Activated T-helper 2 cell treated with anti-CD3 and anti-CD28 coated beads, Interferon-gamma antibody, Interleukin-2, Interleukin-4, amounts not matched to agents 10 μg/mL and 5 μg/mL and 100 μg/mL, durations not matched to agents 14 hours and 24 hours and 36 hours (primary cell): ENCODE measurements at regions of chr2 and their contacts with region 1.

Region 1: DNA sequence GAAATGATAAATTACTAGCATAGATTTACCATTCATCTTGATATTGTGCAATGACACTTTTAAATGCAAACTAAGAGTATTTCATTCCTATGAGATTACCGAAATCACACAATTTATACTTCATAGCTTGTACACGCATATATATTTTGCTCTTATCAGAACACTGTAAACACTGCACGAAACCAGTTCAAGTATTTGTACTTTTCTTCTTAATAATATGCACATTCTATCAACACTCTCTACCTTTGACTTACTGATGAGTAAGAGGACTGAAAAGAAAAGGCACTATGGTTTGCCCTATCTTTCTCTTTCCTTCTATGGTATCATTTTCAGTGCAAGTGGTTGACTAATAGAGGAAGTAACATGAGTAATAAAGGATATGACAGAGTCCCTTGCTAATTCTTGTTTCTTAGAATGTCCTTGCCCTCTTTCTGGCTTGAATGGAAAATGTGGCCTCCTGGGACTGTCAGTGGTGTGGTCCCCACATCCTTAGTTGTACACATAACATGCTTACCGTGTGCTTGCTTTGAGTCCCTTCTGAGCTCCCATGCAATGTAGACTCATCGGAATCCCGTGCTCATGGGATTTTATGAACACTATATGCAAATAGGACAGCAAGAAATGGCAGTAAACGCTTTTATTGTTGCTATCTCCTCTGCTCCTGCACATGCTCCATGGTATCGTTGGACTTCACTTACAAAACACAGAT is 363.5 kb upstream of the TNP1 start:
- DNase-seq: peak; percentile 56
- H3K4me3 Mint-ChIP-seq: peak overlapping the region; percentile 19
- H3K27ac Mint-ChIP-seq: peak overlapping the region; percentile 58
- H3K4me1 Mint-ChIP-seq: peaks cover 49% of the 10 kb centered on the region
- H3K27me3 Mint-ChIP-seq: peaks cover 4% of the 10 kb centered on the region

Region 2: GRCh38 chr2:216114714-216115557 is 1108.4 kb before region 1 on chr2:
- intact Hi-C with region 1: loop called (anchors 5 kb)
- DNase-seq: peak; percentile 94
- H3K4me3 Mint-ChIP-seq: peak overlapping the region; percentile 86
- H3K27ac Mint-ChIP-seq: peak overlapping the region; percentile 77
- H3K4me1 Mint-ChIP-seq: peaks cover 77% of the 10 kb centered on the region
- H3K27me3 Mint-ChIP-seq: no peaks in the 10 kb centered on the region

Region 3: GRCh38 chr2:216507220-216508160 is 715.9 kb before region 1 on chr2:
- intact Hi-C with region 1: loop called (anchors 10 kb)
- DNase-seq: no peak
- H3K4me3 Mint-ChIP-seq: no peak overlapping the region
- H3K27ac Mint-ChIP-seq: peak overlapping the region; percentile 29
- H3K4me1 Mint-ChIP-seq: peaks cover 24% of the 10 kb centered on the region
- H3K27me3 Mint-ChIP-seq: no peaks in the 10 kb centered on the region

Region 4: DNA sequence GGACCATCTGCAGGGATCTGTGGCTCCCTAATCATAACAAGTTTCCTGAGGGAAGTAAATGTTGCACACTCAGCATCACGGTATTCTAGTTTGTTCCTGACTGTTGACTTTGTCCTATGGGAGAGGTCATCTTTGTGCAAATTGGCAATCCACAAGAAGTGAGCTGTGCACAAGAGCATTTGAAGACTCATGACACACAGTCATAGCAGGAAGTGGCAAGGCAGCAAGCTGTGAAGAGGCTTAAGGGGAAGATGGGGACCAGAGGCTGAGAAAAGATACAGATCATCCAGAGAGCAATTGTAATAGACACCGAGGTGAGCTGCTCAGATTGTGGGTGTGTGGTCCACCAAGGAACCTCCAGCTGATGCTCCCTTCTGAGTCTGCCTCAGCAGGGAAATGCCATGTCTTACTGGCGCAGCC is 366.2 kb before region 1 on chr2:
- intact Hi-C with region 1: loop called (anchors 1 kb)
- DNase-seq: peak; percentile 29
- H3K4me3 Mint-ChIP-seq: no peak overlapping the region
- H3K27ac Mint-ChIP-seq: peak overlapping the region; percentile 88
- H3K4me1 Mint-ChIP-seq: peaks cover 45% of the 10 kb centered on the region
- H3K27me3 Mint-ChIP-seq: no peaks in the 10 kb centered on the region

Region 5: GRCh38 chr2:217166241-217166850 is 57.0 kb before region 1 on chr2:
- intact Hi-C with region 1: loop called (anchors 1 kb)
- DNase-seq: no peak
- H3K4me3 Mint-ChIP-seq: no peak overlapping the region
- H3K27ac Mint-ChIP-seq: no peak overlapping the region
- H3K4me1 Mint-ChIP-seq: peaks cover 19% of the 10 kb centered on the region
- H3K27me3 Mint-ChIP-seq: peaks cover 18% of the 10 kb centered on the region

Region 6: GRCh38 chr2:217256251-217256650 is 32.9 kb after region 1 on chr2:
- intact Hi-C with region 1: no loop called
- DNase-seq: no peak
- H3K4me3 Mint-ChIP-seq: no peak overlapping the region
- H3K27ac Mint-ChIP-seq: no peak overlapping the region
- H3K4me1 Mint-ChIP-seq: no peaks in the 10 kb centered on the region
- H3K27me3 Mint-ChIP-seq: peaks cover 24% of the 10 kb centered on the region

Region 7: DNA sequence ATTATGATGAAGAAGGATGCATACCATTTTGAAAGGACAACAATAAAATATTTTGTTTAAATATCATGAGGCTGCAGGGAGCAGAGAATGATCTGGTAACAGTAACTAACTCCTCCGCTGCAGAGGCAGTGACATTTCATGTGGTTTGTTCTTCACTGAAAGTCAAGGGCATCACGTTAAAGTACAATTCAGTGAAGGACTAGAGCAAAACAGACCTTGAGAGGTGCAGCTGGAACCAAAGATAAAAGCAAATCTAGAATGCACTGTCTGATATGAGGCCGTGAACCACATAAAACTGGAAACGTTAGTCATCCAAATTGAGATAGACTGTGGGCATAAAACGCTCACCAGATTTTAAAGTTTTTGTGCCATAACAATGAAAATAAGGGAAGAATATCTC is 159.4 kb after region 1 on chr2:
- intact Hi-C with region 1: no loop called
- DNase-seq: no peak
- H3K4me3 Mint-ChIP-seq: no peak overlapping the region
- H3K27ac Mint-ChIP-seq: no peak overlapping the region
- H3K4me1 Mint-ChIP-seq: no peaks in the 10 kb centered on the region
- H3K27me3 Mint-ChIP-seq: peaks cover 3% of the 10 kb centered on the region

Region 8: DNA sequence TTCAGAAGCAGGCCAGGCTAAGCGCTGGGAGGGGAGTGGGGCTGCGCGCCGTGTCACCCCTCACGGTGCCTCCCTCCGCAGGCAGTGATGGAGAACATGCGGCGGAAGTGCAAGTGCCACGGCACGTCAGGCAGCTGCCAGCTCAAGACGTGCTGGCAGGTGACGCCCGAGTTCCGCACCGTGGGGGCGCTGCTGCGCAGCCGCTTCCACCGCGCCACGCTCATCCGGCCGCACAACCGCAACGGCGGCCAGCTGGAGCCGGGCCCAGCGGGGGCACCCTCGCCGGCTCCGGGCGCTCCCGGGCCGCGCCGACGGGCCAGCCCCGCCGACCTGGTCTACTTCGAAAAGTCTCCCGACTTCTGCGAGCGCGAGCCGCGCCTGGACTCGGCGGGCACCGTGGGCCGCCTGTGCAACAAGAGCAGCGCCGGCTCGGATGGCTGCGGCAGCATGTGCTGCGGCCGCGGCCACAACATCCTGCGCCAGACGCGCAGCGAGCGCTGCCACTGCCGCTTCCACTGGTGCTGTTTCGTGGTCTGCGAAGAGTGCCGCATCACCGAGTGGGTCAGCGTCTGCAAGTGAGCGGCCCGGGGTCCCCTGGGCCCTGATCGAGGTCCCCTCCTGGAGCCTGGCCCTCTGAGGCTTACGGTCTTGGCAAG is 1669.4 kb after region 1 on chr2:
- intact Hi-C with region 1: loop called (anchors 10 kb)
- DNase-seq: peak; percentile 77
- H3K4me3 Mint-ChIP-seq: peak overlapping the region; percentile 72
- H3K27ac Mint-ChIP-seq: peak overlapping the region; percentile 69
- H3K4me1 Mint-ChIP-seq: peaks cover 39% of the 10 kb centered on the region
- H3K27me3 Mint-ChIP-seq: peaks cover 25% of the 10 kb centered on the region